PC-3 (cell line): ENCODE measurements at regions of chr16 and their contacts with region 1.

Region 1: GRCh38 chr16:67865316-67865715 is 7.5 kb upstream of the EDC4 start:
- DNase-seq: peak; percentile 45
- ATAC-seq: peak; percentile 56
- H3K4me3 ChIP-seq: no peak overlapping the region
- H3K27ac ChIP-seq: no peak overlapping the region
- H3K4me1 ChIP-seq: peaks cover 13% of the 10 kb centered on the region
- H3K27me3 ChIP-seq: no peaks in the 10 kb centered on the region
- CTCF ChIP-seq: peak; percentile 64

Region 2: GRCh38 chr16:67841764-67842508 is 23.4 kb before region 1 on chr16 and contains the start of gene THAP11:
- CTCF ChIA-PET with region 1: interaction called, 5 read pairs
- POLR2A ChIA-PET with region 1: interaction called, 4 read pairs
- intact Hi-C with region 1: loop called (anchors 2 kb)
- DNase-seq: peak; percentile 94
- ATAC-seq: peak; percentile 54
- H3K4me3 ChIP-seq: peak within 1 kb of the TSS; percentile 89
- H3K27ac ChIP-seq: peak within 1 kb of the TSS; percentile 83
- H3K4me1 ChIP-seq: peaks cover 31% of the 10 kb centered on the region
- H3K27me3 ChIP-seq: no peaks in the 10 kb centered on the region
- CTCF ChIP-seq: peak; percentile 63
- total RNA-seq, gene THAP11: 39.1 and 39.8 TPM in 2 replicates

Region 3: GRCh38 chr16:67883872-67884261 is 18.6 kb after region 1 on chr16:
- CTCF ChIA-PET with region 1: no interaction called
- POLR2A ChIA-PET with region 1: no interaction called
- intact Hi-C with region 1: no loop called
- DNase-seq: peak; percentile 59
- ATAC-seq: peak; percentile 74
- H3K4me3 ChIP-seq: no peak overlapping the region
- H3K27ac ChIP-seq: no peak overlapping the region
- H3K4me1 ChIP-seq: peaks cover 6% of the 10 kb centered on the region; the same call in 1 of the 2 replicates
- H3K27me3 ChIP-seq: no peaks in the 10 kb centered on the region
- CTCF ChIP-seq: peak; percentile 86